Tibial artery (tissue), 4 donors: ENCODE measurements at regions of chr10 and their contacts with region 1.

Region 1: GRCh38 chr10:124388823-124389612 is 29.7 kb downstream of the OAT start:
- DNase-seq: peak; percentile 80 to 93
- H3K4me3 ChIP-seq: peak overlapping the region; percentile 45 to 51
- H3K27ac ChIP-seq: peak overlapping the region in 1 of 2 donors; percentile 51
- H3K4me1 ChIP-seq: peaks cover 0 to 23% (median 19%) of the 10 kb centered on the region in 4 donors
- H3K27me3 ChIP-seq: no peaks in the 10 kb centered on the region
- CTCF ChIP-seq: peak; percentile 94 to 97

Region 2: DNA sequence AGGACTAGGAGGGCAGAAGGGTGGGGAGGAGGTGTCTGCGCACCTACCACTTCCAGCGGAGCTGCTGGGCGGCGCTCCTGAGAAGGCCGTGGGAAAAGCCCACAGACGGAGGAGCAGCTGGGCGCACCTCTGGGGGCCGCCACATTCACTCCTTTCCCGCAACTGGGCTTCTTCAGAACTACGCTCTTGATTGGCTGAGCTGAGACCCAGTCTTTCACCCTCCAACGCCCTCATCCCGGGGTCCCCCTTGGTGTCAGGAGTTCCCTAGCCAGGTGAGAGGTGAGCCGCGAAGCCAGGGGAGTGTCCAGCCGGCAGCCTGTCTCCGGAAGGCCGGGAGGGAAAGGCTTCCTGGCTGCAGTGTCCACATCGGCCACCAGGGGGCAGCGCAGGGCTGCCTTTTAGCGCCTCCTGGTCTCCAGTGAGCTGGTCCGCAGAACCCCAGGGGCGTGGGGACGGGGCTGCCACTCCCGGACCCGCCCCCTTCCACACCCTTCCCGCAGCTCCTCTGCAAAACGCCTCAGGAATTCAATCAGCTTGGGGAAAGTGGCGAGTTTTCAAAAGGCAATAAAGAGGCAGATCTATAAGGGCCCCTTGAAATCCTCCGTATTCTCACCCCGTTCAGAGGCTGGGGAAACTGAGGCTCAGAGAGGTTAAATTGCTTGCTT is 394.5 kb before region 1 on chr10:
- intact Hi-C with region 1: loop called (anchors 2 kb)
- DNase-seq: peak; percentile 69 to 87
- H3K4me3 ChIP-seq: peak overlapping the region; percentile 23 to 43
- H3K27ac ChIP-seq: no peak overlapping the region
- H3K4me1 ChIP-seq: peaks cover 0 to 30% (median 25%) of the 10 kb centered on the region in 4 donors
- H3K27me3 ChIP-seq: peaks cover 0 to 42% of the 10 kb centered on the region in 2 donors
- CTCF ChIP-seq: peak; percentile 99

Region 3: GRCh38 chr10:124025660-124026588 is 363.1 kb before region 1 on chr10:
- intact Hi-C with region 1: loop called (anchors 10 kb)
- DNase-seq: peak in 1 of 2 donors; percentile 79
- H3K4me3 ChIP-seq: no peak overlapping the region
- H3K27ac ChIP-seq: peak overlapping the region in 1 of 2 donors; percentile 61
- H3K4me1 ChIP-seq: peaks cover 0 to 23% (median 17%) of the 10 kb centered on the region in 4 donors
- H3K27me3 ChIP-seq: no peaks in the 10 kb centered on the region
- CTCF ChIP-seq: peak; percentile 68 to 77